ENCODE measurements at regions of chr1 and their contacts with region 1.

Region 1: GRCh38 chr1:10430216-10431069 is at the start of gene CENPS:
- DNase-seq: peak; percentile 95
- H3K4me3 ChIP-seq: peak within 1 kb of the TSS; percentile 70 to 83 (median 77)
- H3K27ac ChIP-seq: peak within 1 kb of the TSS; percentile 67 to 83 (median 79)
- H3K4me1 ChIP-seq: peaks cover 8 to 30% (median 20%) of the 10 kb centered on the region in 4 donors
- H3K27me3 ChIP-seq: no peaks in the 10 kb centered on the region
- CTCF ChIP-seq: peak in 2 of 3 experiments; percentile 95 to 99
- EP300 ChIP-seq: no peak
- POLR2A ChIP-seq: no peak
- total RNA-seq, gene CENPS: 4.0 to 13.3 (median 6.1) TPM

Region 2: GRCh38 chr1:9874959-9875635 is 555.3 kb before region 1 on chr1:
- intact Hi-C with region 1: loop called (anchors 5 kb)
- DNase-seq: no peak
- H3K4me3 ChIP-seq: peak overlapping the region; percentile 30 to 47 (median 39)
- H3K27ac ChIP-seq: peak overlapping the region; percentile 67 to 73 (median 72)
- H3K4me1 ChIP-seq: peaks cover 19 to 24% (median 21%) of the 10 kb centered on the region in 4 donors
- H3K27me3 ChIP-seq: no peaks in the 10 kb centered on the region
- CTCF ChIP-seq: peak; percentile 93 to 97 (median 94)
- EP300 ChIP-seq: no peak
- POLR2A ChIP-seq: no peak

Region 3: GRCh38 chr1:10378081-10378841 is 52.2 kb before region 1 on chr1:
- intact Hi-C with region 1: loop called (anchors 2 kb)
- DNase-seq: no peak
- H3K4me3 ChIP-seq: no peak overlapping the region
- H3K27ac ChIP-seq: peak overlapping the region; percentile 58 to 80 (median 72)
- H3K4me1 ChIP-seq: peaks cover 0 to 15% (median 11%) of the 10 kb centered on the region in 4 donors
- H3K27me3 ChIP-seq: no peaks in the 10 kb centered on the region
- CTCF ChIP-seq: no peak
- EP300 ChIP-seq: no peak
- POLR2A ChIP-seq: no peak

Region 4: GRCh38 chr1:10398734-10399623 is 31.5 kb before region 1 on chr1 and contains the start of gene PGD:
- intact Hi-C with region 1: loop called (anchors 2 kb)
- DNase-seq: peak; percentile 100
- H3K4me3 ChIP-seq: peak within 1 kb of the TSS; percentile 73 to 89 (median 86)
- H3K27ac ChIP-seq: peak within 1 kb of the TSS; percentile 84 to 93 (median 88)
- H3K4me1 ChIP-seq: peaks cover 13 to 38% (median 27%) of the 10 kb centered on the region in 4 donors
- H3K27me3 ChIP-seq: no peaks in the 10 kb centered on the region
- CTCF ChIP-seq: peak in 1 of 3 experiments; percentile 2
- EP300 ChIP-seq: no peak
- POLR2A ChIP-seq: peak; percentile 30
- total RNA-seq, gene PGD: 24.5 to 58.6 (median 51.9) TPM

Region 5: GRCh38 chr1:10494754-10495474 is 64.5 kb after region 1 on chr1:
- intact Hi-C with region 1: loop called (anchors 2 kb)
- DNase-seq: peak; percentile 93
- H3K4me3 ChIP-seq: peak overlapping the region; percentile 19 to 29 (median 25)
- H3K27ac ChIP-seq: peak overlapping the region in 1 of 4 donors; percentile 27
- H3K4me1 ChIP-seq: peaks cover 14 to 23% (median 20%) of the 10 kb centered on the region in 4 donors
- H3K27me3 ChIP-seq: no peaks in the 10 kb centered on the region
- CTCF ChIP-seq: peak; percentile 78 to 86 (median 85)
- EP300 ChIP-seq: no peak
- POLR2A ChIP-seq: no peak

Region 6: GRCh38 chr1:10867138-10867721 is 436.8 kb after region 1 on chr1:
- intact Hi-C with region 1: loop called (anchors 5 kb)
- DNase-seq: no peak
- H3K4me3 ChIP-seq: peak overlapping the region; percentile 56 to 68 (median 60)
- H3K27ac ChIP-seq: no peak overlapping the region
- H3K4me1 ChIP-seq: peaks cover 22 to 31% (median 27%) of the 10 kb centered on the region in 4 donors
- H3K27me3 ChIP-seq: peaks cover 0 to 40% (median 3%) of the 10 kb centered on the region in 4 donors
- CTCF ChIP-seq: peak; percentile 88 to 93 (median 89)
- EP300 ChIP-seq: no peak
- POLR2A ChIP-seq: no peak